ENCODE measurements at regions of chr20 and their contacts with region 1.

Region 1: DNA sequence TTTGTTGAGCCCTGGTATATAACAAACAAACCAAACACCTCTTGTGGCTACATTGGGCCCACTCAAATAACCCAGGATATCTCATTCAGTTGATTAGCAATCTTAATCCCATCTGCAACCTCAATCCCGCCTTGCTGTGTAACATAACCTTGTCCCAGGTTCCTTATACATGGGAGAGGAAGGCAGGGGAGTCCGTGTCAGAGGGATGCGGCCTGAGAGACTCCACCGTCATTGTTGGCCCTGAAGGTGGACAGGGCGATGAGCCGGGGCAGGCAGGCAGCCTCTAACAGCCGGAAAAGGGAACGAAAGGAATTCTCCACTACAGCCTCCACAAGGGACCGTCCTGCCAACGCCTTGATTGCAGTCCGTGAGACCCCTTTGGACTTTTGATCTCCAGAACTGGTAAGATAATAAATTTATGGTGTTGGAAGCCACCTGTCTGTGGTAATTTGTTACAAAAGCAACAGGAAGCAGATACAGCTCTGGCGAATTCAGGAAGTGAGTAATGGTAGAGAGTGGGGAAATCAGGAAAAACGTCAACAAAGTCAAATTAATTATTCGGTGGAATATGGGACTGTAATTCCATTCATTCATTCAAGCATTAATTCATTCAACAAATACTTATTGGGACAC is 124.5 kb upstream of the SALL4 start:
- DNase-seq: no peak
- ATAC-seq: no peak
- H3K4me3 ChIP-seq: no peak overlapping the region
- H3K4me3 Mint-ChIP-seq: no peak overlapping the region
- H3K27ac ChIP-seq: no peak overlapping the region
- H3K27ac Mint-ChIP-seq: no peak overlapping the region
- H3K4me1 ChIP-seq: no peaks in the 10 kb centered on the region
- H3K4me1 Mint-ChIP-seq: peaks cover 0 to 2% (median 0%) of the 10 kb centered on the region in 7 donors
- H3K27me3 ChIP-seq: no peaks in the 10 kb centered on the region
- H3K27me3 Mint-ChIP-seq: peaks cover 0 to 13% (median 6%) of the 10 kb centered on the region in 5 donors

Region 2: DNA sequence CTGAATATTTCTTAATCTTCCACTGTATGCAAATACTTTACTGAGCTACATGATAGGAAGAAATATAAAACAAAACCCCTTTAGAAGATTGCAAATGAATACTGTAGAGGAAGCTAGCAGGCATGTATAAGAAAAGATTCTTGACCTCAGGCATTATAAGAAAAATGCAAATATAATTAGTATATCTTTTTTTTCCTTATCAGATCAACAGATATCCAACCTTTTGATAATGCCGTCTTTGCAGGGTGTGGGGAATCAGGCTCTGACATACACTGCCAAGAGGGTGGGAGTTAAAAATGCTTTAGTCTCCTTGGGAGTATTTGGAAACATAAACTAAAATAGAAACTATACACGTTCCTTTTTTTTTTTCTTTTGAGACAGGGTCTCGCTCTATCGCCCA is 73.6 kb before region 1 on chr20:
- CTCF ChIA-PET with region 1: no interaction called
- POLR2A ChIA-PET with region 1: no interaction called
- intact Hi-C with region 1: loop called in 1 of 2 experiments (anchors 2 kb)
- DNase-seq: no peak
- ATAC-seq: no peak
- H3K4me3 ChIP-seq: no peak overlapping the region
- H3K4me3 Mint-ChIP-seq: no peak overlapping the region
- H3K27ac ChIP-seq: no peak overlapping the region
- H3K27ac Mint-ChIP-seq: no peak overlapping the region
- H3K4me1 ChIP-seq: no peaks in the 10 kb centered on the region
- H3K4me1 Mint-ChIP-seq: no peaks in the 10 kb centered on the region
- H3K27me3 ChIP-seq: no peaks in the 10 kb centered on the region
- H3K27me3 Mint-ChIP-seq: peaks cover 0 to 9% (median 0%) of the 10 kb centered on the region in 5 donors

Region 3: DNA sequence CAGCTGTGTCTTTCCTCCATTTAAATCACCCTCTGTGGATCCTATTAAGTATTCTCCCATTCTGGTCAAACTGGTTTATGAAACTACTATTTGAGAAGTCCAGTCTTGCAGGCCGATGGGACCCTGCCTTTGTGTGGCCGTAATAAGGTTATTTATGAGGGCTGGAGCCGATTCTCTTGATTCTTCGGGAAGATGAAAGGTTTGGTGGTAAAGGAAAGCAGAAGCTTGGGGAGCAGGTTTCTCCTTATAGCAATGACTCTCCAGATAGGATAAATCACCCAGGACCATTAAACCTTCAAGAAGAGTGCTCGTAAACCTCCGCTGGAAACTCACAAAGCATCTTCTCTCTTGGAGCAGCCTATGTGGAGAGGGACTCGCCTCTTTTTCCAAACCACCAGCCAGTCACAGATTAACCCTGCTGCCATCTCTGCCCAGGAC is 54.9 kb before region 1 on chr20:
- CTCF ChIA-PET with region 1: no interaction called
- POLR2A ChIA-PET with region 1: no interaction called
- intact Hi-C with region 1: no loop called
- DNase-seq: no peak
- ATAC-seq: no peak
- H3K4me3 ChIP-seq: no peak overlapping the region
- H3K4me3 Mint-ChIP-seq: no peak overlapping the region
- H3K27ac ChIP-seq: no peak overlapping the region
- H3K27ac Mint-ChIP-seq: no peak overlapping the region
- H3K4me1 ChIP-seq: no peaks in the 10 kb centered on the region
- H3K4me1 Mint-ChIP-seq: no peaks in the 10 kb centered on the region
- H3K27me3 ChIP-seq: no peaks in the 10 kb centered on the region
- H3K27me3 Mint-ChIP-seq: peaks cover 0 to 8% (median 0%) of the 10 kb centered on the region in 5 donors